ENCODE measurements at regions of chr7 and their contacts with region 1.

Region 1: DNA sequence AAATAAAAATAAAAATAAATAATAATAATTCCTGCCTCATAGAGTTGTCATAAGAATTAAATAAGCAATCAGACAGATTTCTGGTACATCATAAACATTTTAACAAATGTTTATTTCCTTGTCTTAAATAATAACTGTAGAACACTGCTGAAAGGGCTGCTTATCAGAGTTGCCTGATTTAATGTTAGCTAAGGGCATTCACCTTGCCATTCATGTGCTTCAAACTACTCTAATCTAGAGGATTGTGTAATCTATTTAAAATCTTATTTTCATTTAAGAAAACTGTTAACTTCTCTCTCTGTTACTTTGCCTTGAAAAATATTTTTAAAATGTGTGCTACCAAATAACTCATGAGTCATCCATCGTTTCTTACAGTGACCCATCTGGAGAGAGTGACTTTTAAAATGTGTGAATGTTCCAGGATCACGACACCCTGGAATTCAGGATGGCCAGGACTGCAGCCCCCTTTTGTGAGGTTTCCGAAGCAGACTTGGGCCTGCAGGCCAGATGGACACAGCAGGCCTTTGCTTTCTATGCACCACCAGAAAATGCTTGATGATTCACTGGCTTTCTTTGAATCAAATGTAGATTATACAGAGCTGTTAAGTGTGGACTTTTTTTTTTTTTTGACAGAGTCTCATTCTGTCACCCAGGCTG is 109.1 kb upstream of the TNS3 start:
- DNase-seq: peak; percentile 93
- H3K4me3 ChIP-seq: no peak overlapping the region
- H3K27me3 ChIP-seq: no peaks in the 10 kb centered on the region
- CTCF ChIP-seq: no peak

Region 2: DNA sequence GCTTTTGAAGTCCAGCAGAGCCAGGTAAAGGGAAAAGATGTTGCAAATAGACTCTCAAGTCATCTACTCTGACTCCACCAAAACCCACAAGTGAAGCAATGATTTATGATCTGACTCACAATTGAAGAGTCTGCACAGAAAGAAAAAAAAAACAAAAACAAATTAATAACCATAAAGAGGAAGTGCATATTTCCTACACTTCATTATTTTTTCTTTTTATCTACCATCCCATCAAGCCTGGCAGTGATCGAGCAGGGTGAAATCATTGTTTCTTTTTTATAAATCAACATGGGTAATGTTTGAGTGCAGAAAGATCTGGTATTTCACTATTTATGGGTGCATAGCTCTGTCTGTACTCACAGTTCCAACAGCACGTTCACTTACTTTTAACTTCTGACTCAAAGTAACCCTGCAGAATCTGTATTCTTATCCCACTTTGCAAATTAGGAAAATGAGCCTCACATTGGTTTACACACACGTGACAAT is 938.1 kb before region 1 on chr7:
- CTCF ChIA-PET with region 1: no interaction called
- POLR2A ChIA-PET with region 1: no interaction called
- DNase-seq: peak; percentile 87
- H3K4me3 ChIP-seq: no peak overlapping the region
- H3K27me3 ChIP-seq: no peaks in the 10 kb centered on the region
- CTCF ChIP-seq: no peak

Region 3: DNA sequence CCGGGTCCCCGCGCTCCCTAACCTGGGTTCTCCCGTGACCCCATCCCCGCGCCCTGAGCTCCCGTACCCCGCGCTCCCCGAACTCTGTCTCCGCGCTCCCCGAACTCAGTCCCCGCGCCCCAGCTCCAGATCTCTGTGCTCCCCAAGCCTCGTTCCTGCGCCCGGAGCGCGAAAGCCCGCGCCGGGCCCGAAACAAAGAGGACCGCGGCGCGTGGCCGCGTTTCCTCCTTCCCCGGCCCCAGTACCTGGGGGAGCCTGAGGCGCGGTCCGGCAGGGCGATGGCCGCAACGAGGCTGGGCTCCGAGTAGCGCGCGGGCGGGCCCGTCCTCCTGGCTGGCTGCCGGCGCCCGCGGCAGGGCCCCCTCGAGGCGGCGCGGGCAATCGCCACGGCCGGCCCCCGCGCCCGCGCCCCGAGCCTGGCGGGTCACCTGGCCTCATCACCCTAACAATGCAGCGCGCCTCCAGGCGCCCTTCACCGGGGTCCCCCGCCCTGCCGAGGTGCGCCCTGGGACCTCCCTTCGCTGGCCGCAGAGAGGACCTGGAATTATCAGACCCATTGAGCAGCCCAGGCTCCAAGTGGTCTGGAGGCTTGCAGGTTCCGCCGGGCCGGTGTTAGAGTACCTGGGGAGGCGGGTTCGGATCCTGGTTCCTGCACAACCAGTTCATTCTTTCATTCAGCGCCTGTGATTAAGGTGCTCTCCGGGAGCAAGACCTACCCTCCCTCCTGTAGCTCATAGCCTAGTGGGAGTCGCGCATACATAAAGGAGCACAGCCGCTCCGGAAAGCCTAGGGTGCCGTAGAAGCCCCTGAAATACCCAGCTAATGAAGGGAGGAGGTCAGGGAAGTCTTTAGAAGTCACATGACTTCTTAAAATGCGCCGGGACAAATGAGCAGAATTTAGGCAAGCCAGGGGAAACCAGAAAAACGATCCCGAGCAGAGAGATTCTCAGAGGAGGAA is 108.9 kb before region 1 on chr7 and contains the start of gene TNS3:
- CTCF ChIA-PET with region 1: no interaction called
- POLR2A ChIA-PET with region 1: interaction called, 12 read pairs
- DNase-seq: no peak
- H3K4me3 ChIP-seq: peak within 1 kb of the TSS; percentile 77
- H3K27me3 ChIP-seq: no peaks in the 10 kb centered on the region
- CTCF ChIP-seq: no peak
- polyA plus RNA-seq, gene TNS3: 94.2 and 126 TPM in 2 replicates

Region 4: DNA sequence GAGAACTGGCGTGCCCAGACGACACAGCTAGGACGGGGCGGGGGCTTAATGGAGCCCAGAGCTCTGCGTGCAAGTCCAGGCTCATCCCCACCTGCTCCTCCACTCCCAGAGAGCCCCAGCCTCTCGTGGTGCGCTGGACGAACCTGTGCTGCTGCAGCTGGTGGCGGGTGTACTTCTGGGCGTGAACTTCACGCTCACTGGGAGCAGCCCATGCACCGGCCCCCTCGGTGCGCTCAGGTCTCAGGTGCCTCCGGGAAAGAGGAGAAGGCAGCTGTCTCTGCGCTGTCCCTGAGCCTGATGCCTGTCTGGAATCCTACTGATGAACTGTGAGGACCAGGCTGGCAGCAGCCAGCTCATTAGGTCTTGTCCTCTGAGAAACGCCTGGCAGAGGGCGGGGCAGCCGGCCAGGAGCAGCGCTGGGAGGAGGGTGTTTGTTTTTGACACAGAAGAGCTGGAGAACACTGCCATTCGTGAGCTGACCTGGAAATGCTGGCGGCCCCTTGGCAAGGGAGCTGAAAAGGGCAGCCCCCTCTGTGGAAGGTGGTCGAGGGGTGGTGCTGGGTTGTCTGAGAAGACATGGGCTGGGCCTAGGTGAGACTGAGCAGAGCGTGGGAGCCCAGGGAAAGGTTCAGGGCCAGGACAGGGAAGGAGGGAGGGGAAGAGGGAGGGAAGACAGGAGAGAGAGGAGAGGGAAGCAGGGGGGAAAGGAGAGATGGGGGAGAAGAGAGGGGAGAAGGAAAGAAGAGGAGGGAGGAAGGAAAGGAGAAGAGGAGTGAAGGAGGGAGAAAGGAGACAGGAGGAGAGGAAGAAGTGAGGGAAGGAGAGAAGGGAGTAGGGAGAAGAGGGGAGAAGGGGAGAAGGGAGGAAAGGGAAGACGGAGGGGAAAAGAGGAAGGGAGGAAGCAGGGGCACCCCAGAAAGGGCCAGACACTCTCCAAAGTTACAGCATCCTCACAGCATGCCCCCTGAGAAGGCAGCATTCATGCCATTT is 55.6 kb before region 1 on chr7:
- CTCF ChIA-PET with region 1: no interaction called
- POLR2A ChIA-PET with region 1: no interaction called
- DNase-seq: no peak
- H3K4me3 ChIP-seq: no peak overlapping the region
- H3K27me3 ChIP-seq: no peaks in the 10 kb centered on the region
- CTCF ChIP-seq: no peak

Measured in BJ (cell line).